SK-N-SH (cell line): ENCODE measurements at regions of chr18 and their contacts with region 1.

Region 1: DNA sequence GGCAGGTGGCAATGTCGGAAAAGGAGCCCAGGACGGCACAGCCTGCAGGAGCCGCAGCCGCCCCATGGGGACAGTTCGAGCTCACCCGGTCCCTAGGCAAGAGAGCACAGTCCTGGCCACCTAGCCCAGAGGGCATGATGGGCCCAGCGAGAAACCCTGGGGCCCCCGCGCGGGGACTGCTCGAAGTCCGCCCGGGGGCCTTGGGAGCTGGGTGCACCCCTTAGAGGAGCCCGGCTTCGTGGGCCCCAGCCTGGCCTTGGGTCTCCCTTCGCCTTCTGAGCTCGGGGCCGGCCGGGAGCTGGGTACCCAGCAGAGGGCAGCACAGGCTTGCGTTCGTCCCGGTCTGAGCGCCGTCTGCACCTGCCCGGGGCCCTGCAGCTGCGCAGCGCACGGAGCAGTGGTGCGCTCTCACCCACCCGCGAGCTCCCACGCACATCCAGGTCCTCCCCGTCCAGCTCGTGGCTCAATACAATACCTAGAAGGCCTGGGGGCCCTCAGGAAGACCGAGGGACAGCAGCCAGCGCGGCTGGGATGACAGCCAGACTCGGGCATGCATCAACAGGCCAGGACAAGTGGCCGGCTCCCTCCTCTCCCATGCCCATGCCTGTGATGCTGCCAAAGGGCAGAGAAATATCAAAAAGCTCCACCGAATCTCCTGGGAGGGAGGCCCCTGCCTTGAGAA is 96.2 kb upstream of the ZNF532 start:
- DNase-seq: peak; percentile 94
- H3K4me3 ChIP-seq: peak overlapping the region; percentile 38 to 62
- H3K27ac ChIP-seq: no peak overlapping the region; a peak in 1 of 4 replicates
- H3K4me1 ChIP-seq: peaks cover 2 to 4% of the 10 kb centered on the region in 2 experiments; a peak in 1 of 4 replicates
- H3K27me3 ChIP-seq: no peaks in the 10 kb centered on the region
- CTCF ChIP-seq: peak; percentile 82
- EP300 ChIP-seq: no peak
- RAD21 ChIP-seq: peak; percentile 83

Region 2: DNA sequence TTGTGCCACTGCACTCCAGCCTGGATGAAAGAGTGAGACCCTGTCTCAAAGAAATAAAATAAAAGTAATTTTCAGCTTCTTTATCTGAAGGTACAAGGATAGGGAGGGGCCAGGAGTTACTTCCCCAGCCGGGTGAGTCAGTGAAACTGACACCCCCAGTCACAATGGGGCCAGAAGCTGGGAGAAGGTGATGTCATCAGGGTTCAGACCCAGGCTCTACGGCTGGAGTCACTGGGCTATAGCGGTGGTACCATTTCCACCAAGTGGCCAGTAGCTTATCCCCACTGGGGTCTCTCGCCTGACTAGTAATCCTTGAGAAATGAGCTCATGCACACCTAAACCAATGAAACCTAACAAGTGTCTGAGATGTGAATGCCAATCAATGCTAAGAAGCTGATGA is 247.5 kb before region 1 on chr18:
- CTCF ChIA-PET with region 1: interaction called, 31 read pairs
- POLR2A ChIA-PET with region 1: no interaction called
- DNase-seq: no peak
- H3K4me3 ChIP-seq: no peak overlapping the region
- H3K27ac ChIP-seq: no peak overlapping the region
- H3K4me1 ChIP-seq: no peaks in the 10 kb centered on the region; a peak in 1 of 4 replicates
- H3K27me3 ChIP-seq: no peaks in the 10 kb centered on the region
- CTCF ChIP-seq: no peak
- EP300 ChIP-seq: no peak
- RAD21 ChIP-seq: no peak

Region 3: DNA sequence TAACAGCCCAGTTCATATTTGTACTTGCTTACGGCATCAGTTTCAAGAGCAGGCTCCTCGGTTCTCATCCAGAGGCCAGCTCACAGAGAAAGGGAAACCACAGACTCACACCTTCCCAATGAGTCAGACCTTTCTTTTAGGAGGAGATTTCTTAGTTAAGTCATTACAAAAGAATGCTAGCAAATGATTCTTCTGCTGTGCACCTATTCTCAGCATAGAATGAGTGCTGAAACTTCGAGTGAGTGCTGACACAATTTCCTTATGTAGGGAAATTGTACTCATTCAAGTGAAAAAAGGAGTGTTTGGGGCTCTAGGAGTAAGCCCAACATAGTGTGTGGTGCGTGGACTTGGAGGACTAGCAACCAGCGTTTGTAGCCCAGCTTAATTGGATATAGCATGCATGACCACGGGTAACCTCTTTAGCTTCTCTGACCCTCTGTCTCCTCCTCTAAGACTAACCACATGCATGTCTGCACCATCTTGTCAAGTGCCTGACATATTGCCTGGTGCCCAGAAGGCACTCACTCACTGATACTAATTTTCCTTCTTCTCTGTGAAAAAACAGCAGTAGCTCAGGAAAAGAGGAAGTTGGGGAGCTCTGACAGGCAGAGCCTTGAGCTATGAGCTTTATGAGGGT is 226.5 kb before region 1 on chr18:
- CTCF ChIA-PET with region 1: interaction called, 26 read pairs
- POLR2A ChIA-PET with region 1: no interaction called
- DNase-seq: no peak
- H3K4me3 ChIP-seq: no peak overlapping the region
- H3K27ac ChIP-seq: peak overlapping the region; percentile 28 to 87; a peak in 3 of 4 replicates
- H3K4me1 ChIP-seq: peaks cover 0 to 7% of the 10 kb centered on the region in 2 experiments; a peak in 2 of 4 replicates
- H3K27me3 ChIP-seq: no peaks in the 10 kb centered on the region
- CTCF ChIP-seq: no peak
- EP300 ChIP-seq: peak in 1 of 2 experiments; percentile 37; a peak in 1 of 4 replicates
- RAD21 ChIP-seq: no peak

Region 4: DNA sequence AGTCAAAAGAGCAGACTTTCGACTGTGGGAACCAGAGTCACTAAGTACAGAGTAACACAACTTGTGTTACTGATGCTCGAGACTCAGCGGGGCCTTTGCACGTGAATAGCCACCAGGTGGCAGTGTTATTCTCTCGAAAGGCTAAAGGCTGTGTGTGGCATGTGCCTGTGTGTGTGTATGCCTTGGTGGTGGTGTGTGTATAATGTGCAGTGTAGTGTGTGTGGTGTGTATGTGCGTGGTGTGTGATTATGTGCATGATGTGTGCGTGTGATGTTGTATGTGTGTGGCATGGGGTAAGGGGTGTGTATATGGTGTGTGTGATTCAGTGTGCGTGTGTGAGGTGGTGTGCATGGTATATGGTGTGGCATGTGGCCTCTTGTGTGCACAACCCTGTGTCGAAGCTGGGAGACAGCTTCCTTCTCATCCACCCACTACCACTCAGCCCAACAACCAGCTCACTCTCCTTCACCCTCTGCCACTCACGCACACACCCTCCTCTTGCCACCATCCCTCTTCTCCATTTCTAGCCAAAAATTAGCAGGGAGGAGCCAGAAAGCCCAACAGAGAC is 13.3 kb after region 1 on chr18:
- CTCF ChIA-PET with region 1: interaction called, 75 read pairs
- POLR2A ChIA-PET with region 1: no interaction called
- DNase-seq: peak; percentile 70
- H3K4me3 ChIP-seq: peak overlapping the region in 1 of 2 experiments; percentile 27; a peak in 1 of 4 replicates
- H3K27ac ChIP-seq: no peak overlapping the region
- H3K4me1 ChIP-seq: peaks cover 2 to 14% of the 10 kb centered on the region in 2 experiments; a peak in 2 of 4 replicates
- H3K27me3 ChIP-seq: no peaks in the 10 kb centered on the region
- CTCF ChIP-seq: peak; percentile 96
- EP300 ChIP-seq: no peak
- RAD21 ChIP-seq: peak; percentile 96

Region 5: GRCh38 chr18:58796220-58796619 is 27.8 kb after region 1 on chr18:
- CTCF ChIA-PET with region 1: no interaction called
- POLR2A ChIA-PET with region 1: no interaction called
- DNase-seq: no peak
- H3K4me3 ChIP-seq: no peak overlapping the region
- H3K27ac ChIP-seq: no peak overlapping the region
- H3K4me1 ChIP-seq: no peaks in the 10 kb centered on the region
- H3K27me3 ChIP-seq: no peaks in the 10 kb centered on the region
- CTCF ChIP-seq: no peak
- EP300 ChIP-seq: no peak
- RAD21 ChIP-seq: no peak

Region 6: GRCh38 chr18:58842978-58843687 is 74.7 kb after region 1 on chr18:
- CTCF ChIA-PET with region 1: no interaction called
- POLR2A ChIA-PET with region 1: no interaction called
- DNase-seq: no peak
- H3K4me3 ChIP-seq: no peak overlapping the region
- H3K27ac ChIP-seq: no peak overlapping the region
- H3K4me1 ChIP-seq: peaks cover 0 to 5% of the 10 kb centered on the region in 2 experiments; a peak in 1 of 4 replicates
- H3K27me3 ChIP-seq: no peaks in the 10 kb centered on the region
- CTCF ChIP-seq: no peak
- EP300 ChIP-seq: no peak
- RAD21 ChIP-seq: no peak

Region 7: DNA sequence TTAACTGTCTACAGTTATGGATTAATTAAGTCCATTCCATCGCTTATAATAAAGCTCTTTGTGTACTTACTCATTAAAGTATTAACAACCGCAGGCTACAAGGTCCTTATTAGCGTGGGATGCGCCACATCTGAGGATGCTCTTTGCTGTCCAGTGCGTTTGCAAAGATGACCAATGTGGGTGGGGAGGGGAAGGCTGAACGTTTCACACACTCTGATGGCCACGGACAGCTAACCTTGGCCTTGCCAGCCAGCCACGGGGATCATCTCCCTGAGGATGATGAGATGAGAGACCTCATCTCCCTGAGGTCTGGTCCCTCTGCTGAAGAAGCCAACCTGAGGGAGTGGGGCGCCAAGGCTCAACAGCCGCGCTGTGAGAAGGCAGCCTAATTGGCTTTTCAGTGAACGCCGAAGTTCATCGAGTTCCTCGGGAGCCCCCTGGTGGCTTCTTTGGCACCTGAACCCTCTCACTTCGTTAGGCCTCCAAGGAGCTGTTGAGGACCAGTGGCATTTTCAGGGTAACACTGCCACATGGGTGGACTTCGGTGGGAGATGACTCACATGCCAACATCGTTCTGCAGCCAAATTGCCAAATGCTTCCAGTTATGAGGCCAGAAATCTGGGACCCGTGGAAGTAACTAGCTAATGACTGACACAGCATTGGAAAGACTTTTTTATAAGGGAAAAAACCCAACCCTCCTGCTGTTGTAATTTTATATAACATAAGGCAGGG is 301.9 kb after region 1 on chr18:
- CTCF ChIA-PET with region 1: interaction called, 215 read pairs
- POLR2A ChIA-PET with region 1: no interaction called
- DNase-seq: peak; percentile 75
- H3K4me3 ChIP-seq: peak overlapping the region in 1 of 2 experiments; percentile 17; a peak in 1 of 4 replicates
- H3K27ac ChIP-seq: no peak overlapping the region
- H3K4me1 ChIP-seq: peaks cover 0 to 2% of the 10 kb centered on the region in 2 experiments; a peak in 1 of 4 replicates
- H3K27me3 ChIP-seq: no peaks in the 10 kb centered on the region
- CTCF ChIP-seq: peak; percentile 89
- EP300 ChIP-seq: no peak
- RAD21 ChIP-seq: peak; percentile 87